ENCODE measurements at regions of chr12 and their contacts with region 1.

Region 1: GRCh38 chr12:108664338-108665258 is 30.9 kb upstream of the SELPLG start:
- DNase-seq: peak; percentile 96
- H3K4me3 Mint-ChIP-seq: peak overlapping the region; percentile 47
- H3K27ac Mint-ChIP-seq: peak overlapping the region; percentile 92
- H3K4me1 Mint-ChIP-seq: peaks cover 34% of the 10 kb centered on the region
- H3K27me3 Mint-ChIP-seq: no peaks in the 10 kb centered on the region
- CTCF ChIP-seq: peak; percentile 83

Region 2: DNA sequence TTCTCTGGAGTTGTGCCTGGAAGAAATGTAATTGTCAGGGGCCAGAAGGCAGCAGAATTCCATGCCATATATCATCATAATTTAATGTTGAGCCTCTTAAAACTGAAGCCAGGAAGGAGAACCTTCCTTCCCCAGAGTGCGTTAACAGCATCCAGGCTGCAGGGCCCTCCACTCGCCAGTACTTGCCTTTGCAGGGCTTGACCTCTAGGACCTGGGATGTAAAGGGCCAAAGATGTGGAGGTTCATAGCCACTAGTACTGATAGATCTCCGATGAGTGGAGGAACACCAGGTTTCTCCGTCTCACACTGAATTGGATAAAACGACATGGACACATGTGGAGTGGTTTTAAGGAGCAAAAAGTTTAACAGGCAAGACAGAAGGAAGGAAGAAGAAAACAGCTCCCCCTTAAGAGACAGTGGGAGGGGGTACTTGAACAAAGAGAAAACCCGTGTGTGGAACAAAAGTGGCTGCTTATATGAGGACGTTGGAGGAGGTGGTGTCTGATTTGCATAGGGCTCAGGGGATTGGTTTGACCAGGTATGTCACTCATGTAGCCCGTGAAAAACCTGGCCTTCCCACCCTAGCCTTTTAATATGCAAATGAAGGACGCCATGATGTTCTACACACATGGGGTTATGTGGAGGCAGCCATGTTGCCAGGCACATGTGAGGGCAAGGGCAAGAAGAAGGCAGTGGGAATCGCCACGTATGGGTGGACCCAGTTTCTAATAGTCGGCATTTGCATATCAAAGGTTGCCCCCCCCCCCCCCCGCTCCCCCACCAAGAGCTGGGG is 574.3 kb before region 1 on chr12:
- CTCF ChIA-PET with region 1: no interaction called
- POLR2A ChIA-PET with region 1: no interaction called
- intact Hi-C with region 1: no loop called
- DNase-seq: no peak
- H3K4me3 Mint-ChIP-seq: no peak overlapping the region
- H3K27ac Mint-ChIP-seq: no peak overlapping the region
- H3K4me1 Mint-ChIP-seq: no peaks in the 10 kb centered on the region
- H3K27me3 Mint-ChIP-seq: peaks cover 7% of the 10 kb centered on the region
- CTCF ChIP-seq: no peak

Region 3: GRCh38 chr12:108678104-108678730 is 13.6 kb after region 1 on chr12:
- CTCF ChIA-PET with region 1: interaction called, 8 read pairs
- POLR2A ChIA-PET with region 1: interaction called, 18 read pairs
- intact Hi-C with region 1: no loop called
- DNase-seq: no peak
- H3K4me3 Mint-ChIP-seq: no peak overlapping the region
- H3K27ac Mint-ChIP-seq: no peak overlapping the region
- H3K4me1 Mint-ChIP-seq: peaks cover 12% of the 10 kb centered on the region
- H3K27me3 Mint-ChIP-seq: no peaks in the 10 kb centered on the region
- CTCF ChIP-seq: no peak

Region 4: DNA sequence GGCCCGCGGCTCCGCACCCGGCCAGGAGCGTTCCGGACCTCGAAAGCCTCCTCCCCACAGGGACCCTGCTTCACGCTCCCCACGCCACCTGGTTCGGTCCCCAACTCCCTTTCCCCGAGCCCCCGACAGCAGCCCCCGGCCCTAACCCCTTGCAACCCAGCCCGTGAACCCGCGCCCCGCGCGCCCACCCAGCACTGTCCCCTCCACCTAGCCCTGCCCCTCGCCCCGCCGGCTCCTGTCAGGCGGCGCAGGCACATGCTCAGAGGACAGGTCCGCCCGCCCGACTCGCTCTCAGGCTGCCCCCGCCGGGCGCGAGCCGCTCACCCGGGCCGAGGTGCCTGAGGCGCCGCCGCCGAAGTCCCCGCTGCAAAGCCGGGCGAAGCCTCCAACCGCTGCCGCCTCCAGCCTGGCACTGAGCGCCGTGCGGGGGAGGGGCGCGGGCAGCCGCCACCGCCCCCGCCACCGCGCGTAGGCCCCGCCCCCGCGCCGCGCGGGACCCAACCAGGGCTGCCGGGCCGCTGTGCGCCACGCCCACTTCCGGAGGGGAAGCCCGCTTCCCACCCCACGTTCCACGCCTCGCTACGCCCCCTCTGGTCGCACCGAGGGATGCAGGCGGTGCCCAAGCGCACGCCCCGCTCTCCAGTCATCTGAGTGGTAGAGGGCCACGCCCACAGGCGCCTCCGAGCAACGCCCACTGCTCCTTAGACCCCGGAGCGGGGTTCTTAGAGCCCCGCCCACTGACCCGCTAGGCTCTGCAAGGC is 66.7 kb after region 1 on chr12 and contains the start of gene CORO1C:
- CTCF ChIA-PET with region 1: interaction called, 11 read pairs
- POLR2A ChIA-PET with region 1: interaction called, 24 read pairs
- intact Hi-C with region 1: loop called (anchors 1 kb)
- DNase-seq: peak; percentile 96
- H3K4me3 Mint-ChIP-seq: peak within 1 kb of the TSS; percentile 90
- H3K27ac Mint-ChIP-seq: peak within 1 kb of the TSS; percentile 87
- H3K4me1 Mint-ChIP-seq: peaks cover 42% of the 10 kb centered on the region
- H3K27me3 Mint-ChIP-seq: no peaks in the 10 kb centered on the region
- CTCF ChIP-seq: peak; percentile 68
- total RNA-seq, gene CORO1C: 130 and 141 TPM in 2 replicates

Region 5: GRCh38 chr12:108816652-108817335 is 152.2 kb after region 1 on chr12:
- CTCF ChIA-PET with region 1: interaction called, 15 read pairs
- POLR2A ChIA-PET with region 1: interaction called, 10 read pairs
- intact Hi-C with region 1: no loop called
- DNase-seq: peak; percentile 33
- H3K4me3 Mint-ChIP-seq: no peak overlapping the region
- H3K27ac Mint-ChIP-seq: peak overlapping the region; percentile 12
- H3K4me1 Mint-ChIP-seq: peaks cover 31% of the 10 kb centered on the region
- H3K27me3 Mint-ChIP-seq: no peaks in the 10 kb centered on the region
- CTCF ChIP-seq: no peak

Region 6: DNA sequence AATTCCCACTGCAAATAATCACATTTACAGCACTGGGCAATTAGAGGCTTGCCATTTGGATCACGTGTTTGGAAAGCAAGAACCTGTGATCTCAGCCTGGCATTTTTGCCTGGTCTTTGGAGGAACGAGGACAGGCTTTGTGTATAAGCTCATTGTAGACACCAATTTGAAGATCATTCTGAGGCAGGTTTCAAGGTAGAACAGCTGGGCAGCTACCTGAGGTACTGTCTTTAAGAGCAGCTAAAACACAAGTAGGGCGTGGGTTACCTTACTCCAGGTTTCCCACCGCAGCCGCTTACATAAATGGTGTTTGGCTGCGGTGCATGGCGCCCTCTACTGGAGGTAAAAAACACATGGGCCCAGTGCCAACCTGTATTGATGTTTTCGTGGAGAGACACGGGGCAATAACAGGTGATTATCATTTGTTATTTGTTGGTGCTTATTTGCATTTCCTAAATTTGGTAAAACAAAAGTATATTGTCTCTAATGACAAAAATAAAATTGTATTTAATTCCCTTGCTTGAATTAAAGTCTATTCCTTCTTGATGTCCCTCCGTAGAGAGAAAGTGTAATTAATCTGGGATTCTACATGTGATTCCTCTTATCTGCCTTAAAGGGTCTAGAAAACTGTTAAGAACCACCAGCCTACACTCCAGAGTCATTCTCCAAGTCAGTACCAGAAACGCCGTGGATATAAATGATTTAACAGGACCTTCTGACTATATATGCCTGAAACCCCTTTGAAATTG is 286.6 kb after region 1 on chr12:
- CTCF ChIA-PET with region 1: interaction called, 30 read pairs
- POLR2A ChIA-PET with region 1: interaction called, 7 read pairs
- intact Hi-C with region 1: loop called (anchors 2 kb)
- DNase-seq: peak; percentile 79
- H3K4me3 Mint-ChIP-seq: no peak overlapping the region
- H3K27ac Mint-ChIP-seq: no peak overlapping the region
- H3K4me1 Mint-ChIP-seq: peaks cover 14% of the 10 kb centered on the region
- H3K27me3 Mint-ChIP-seq: peaks cover 2% of the 10 kb centered on the region
- CTCF ChIP-seq: peak; percentile 81

Region 7: GRCh38 chr12:110338754-110339153 is 1674.2 kb after region 1 on chr12:
- CTCF ChIA-PET with region 1: no interaction called
- POLR2A ChIA-PET with region 1: no interaction called
- intact Hi-C with region 1: no loop called
- DNase-seq: peak; percentile 30
- H3K4me3 Mint-ChIP-seq: no peak overlapping the region
- H3K27ac Mint-ChIP-seq: peak overlapping the region; percentile 47
- H3K4me1 Mint-ChIP-seq: peaks cover 24% of the 10 kb centered on the region
- H3K27me3 Mint-ChIP-seq: no peaks in the 10 kb centered on the region
- CTCF ChIP-seq: peak; percentile 9

Measured in MCF 10A (cell line).